Mammary epithelial cell (primary cell): ENCODE measurements at regions of chr12 and their contacts with region 1.

Region 1: GRCh38 chr12:80412369-80412953 is 31.6 kb upstream of the PTPRQ start:
- DNase-seq: peak; percentile 21
- H3K4me3 ChIP-seq: no peak overlapping the region
- H3K27ac ChIP-seq: no peak overlapping the region
- H3K4me1 ChIP-seq: no peaks in the 10 kb centered on the region
- H3K27me3 ChIP-seq: no peaks in the 10 kb centered on the region
- CTCF ChIP-seq: peak; percentile 68 to 69

Region 2: GRCh38 chr12:80195074-80195726 is 217.3 kb before region 1 on chr12:
- CTCF ChIA-PET with region 1: no interaction called
- dilution Hi-C with region 1: no loop called
- in situ Hi-C with region 1: no loop called
- intact Hi-C with region 1: loop called (anchors 10 kb)
- DNase-seq: peak; percentile 35
- H3K4me3 ChIP-seq: no peak overlapping the region
- H3K27ac ChIP-seq: no peak overlapping the region
- H3K4me1 ChIP-seq: no peaks in the 10 kb centered on the region
- H3K27me3 ChIP-seq: no peaks in the 10 kb centered on the region
- CTCF ChIP-seq: peak; percentile 71 to 82

Region 3: DNA sequence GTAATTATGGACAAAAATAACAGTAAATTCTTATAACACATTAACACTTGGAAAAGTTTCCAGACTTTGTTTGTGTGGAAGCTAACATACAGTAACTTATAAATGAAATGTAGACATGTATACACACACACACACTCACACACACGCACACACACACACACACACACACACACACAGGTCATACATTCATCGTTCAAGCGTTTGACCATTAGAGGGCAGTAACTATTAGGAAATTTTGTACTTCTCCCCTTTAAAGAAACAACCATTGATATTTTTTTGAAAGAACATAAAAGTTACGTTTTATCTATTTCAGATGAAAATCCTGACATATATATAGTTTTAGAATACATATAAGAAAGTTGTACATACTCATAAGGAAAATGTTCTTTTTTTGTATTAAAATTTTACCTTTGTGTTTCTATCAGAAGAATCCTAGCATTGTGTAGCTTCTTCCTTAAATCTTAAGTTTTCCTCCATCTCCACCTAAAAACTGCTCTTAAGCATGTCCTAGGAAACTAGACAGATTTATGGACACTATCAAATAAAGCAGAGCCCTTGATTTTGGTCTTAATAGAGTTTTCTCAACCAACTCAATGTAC is 60.5 kb after region 1 on chr12:
- CTCF ChIA-PET with region 1: no interaction called
- dilution Hi-C with region 1: no loop called
- in situ Hi-C with region 1: no loop called
- intact Hi-C with region 1: loop called (anchors 10 kb)
- DNase-seq: peak; percentile 62
- H3K4me3 ChIP-seq: no peak overlapping the region
- H3K27ac ChIP-seq: no peak overlapping the region
- H3K4me1 ChIP-seq: no peaks in the 10 kb centered on the region
- H3K27me3 ChIP-seq: no peaks in the 10 kb centered on the region
- CTCF ChIP-seq: peak; percentile 62 to 64

Region 4: DNA sequence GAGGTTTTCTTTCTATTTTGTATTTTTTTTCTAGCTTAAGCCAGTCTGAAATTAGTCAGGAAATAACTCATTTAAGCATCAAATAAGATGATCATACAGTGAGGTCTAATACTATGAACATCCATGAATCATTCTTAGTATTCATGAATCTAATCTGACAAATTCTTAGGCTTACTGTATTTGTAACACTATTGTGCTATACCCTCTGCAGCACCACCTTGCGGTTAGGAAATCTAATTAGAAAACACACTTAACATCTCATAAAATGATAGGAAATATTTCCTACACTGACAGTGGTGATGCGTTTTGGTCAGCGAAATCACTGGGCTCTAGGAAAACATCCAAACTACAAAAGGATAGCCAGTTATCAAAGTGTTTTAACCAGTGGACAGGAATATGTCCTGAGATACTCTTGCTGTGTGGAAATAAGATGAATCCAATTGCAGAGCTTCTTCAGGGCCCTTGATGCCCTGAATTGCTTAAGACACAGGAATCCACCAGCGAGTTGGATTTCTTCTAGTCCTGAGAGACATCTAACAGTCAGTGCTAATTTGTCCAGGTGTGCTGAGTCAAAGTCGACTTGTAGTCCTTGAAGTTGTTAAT is 185.6 kb after region 1 on chr12:
- CTCF ChIA-PET with region 1: no interaction called
- dilution Hi-C with region 1: no loop called
- in situ Hi-C with region 1: no loop called
- intact Hi-C with region 1: loop called (anchors 1 kb)
- DNase-seq: peak; percentile 53
- H3K4me3 ChIP-seq: no peak overlapping the region
- H3K27ac ChIP-seq: no peak overlapping the region
- H3K4me1 ChIP-seq: peaks cover 4% of the 10 kb centered on the region
- H3K27me3 ChIP-seq: no peaks in the 10 kb centered on the region
- CTCF ChIP-seq: peak; percentile 49 to 64

Region 5: GRCh38 chr12:80622271-80622670 is 209.8 kb after region 1 on chr12:
- CTCF ChIA-PET with region 1: no interaction called
- dilution Hi-C with region 1: no loop called
- in situ Hi-C with region 1: no loop called
- intact Hi-C with region 1: loop called (anchors 2 kb)
- DNase-seq: no peak
- H3K4me3 ChIP-seq: no peak overlapping the region
- H3K27ac ChIP-seq: no peak overlapping the region
- H3K4me1 ChIP-seq: no peaks in the 10 kb centered on the region
- H3K27me3 ChIP-seq: no peaks in the 10 kb centered on the region
- CTCF ChIP-seq: peak; percentile 22 to 27

Region 6: GRCh38 chr12:80763874-80764273 is 351.4 kb after region 1 on chr12:
- CTCF ChIA-PET with region 1: no interaction called
- dilution Hi-C with region 1: no loop called
- in situ Hi-C with region 1: loop called in 1 of 2 experiments (anchors 10 kb)
- intact Hi-C with region 1: loop called (anchors 1 kb)
- DNase-seq: peak; percentile 16
- H3K4me3 ChIP-seq: no peak overlapping the region
- H3K27ac ChIP-seq: no peak overlapping the region
- H3K4me1 ChIP-seq: no peaks in the 10 kb centered on the region
- H3K27me3 ChIP-seq: peaks cover 4% of the 10 kb centered on the region
- CTCF ChIP-seq: peak; percentile 39 to 64

Region 7: GRCh38 chr12:81128930-81129554 is 716.6 kb after region 1 on chr12:
- CTCF ChIA-PET with region 1: no interaction called
- dilution Hi-C with region 1: no loop called
- in situ Hi-C with region 1: no loop called
- intact Hi-C with region 1: loop called (anchors 1 kb)
- DNase-seq: peak; percentile 27
- H3K4me3 ChIP-seq: no peak overlapping the region
- H3K27ac ChIP-seq: no peak overlapping the region
- H3K4me1 ChIP-seq: no peaks in the 10 kb centered on the region
- H3K27me3 ChIP-seq: no peaks in the 10 kb centered on the region
- CTCF ChIP-seq: peak; percentile 88 to 94